Panc1 (cell line): ENCODE measurements at regions of chr9 and their contacts with region 1.

Region 1: DNA sequence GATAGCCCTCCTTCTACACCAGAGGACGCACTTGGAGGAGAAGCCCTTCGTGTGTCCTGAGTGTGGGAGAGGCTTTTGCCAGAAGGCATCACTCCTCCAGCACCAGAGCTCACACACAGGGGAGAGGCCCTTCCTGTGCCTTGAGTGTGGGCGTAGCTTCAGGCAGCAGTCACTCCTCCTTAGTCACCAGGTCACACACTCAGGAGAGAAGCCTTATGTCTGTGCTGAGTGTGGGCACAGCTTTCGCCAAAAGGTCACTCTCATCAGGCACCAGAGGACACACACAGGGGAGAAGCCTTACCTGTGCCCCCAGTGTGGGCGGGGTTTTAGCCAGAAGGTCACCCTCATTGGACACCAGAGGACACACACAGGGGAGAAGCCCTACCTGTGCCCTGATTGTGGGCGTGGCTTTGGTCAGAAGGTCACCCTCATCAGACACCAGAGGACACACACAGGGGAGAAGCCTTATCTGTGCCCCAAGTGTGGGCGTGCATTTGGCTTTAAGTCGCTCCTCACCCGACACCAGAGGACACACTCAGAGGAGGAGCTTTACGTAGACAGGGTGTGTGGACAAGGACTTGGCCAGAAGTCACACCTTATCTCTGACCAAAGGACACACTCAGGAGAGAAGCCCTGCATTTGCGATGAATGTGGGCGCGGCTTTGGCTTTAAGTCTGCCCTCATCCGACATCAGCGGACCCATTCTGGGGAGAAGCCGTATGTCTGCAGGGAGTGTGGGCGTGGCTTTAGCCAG is 27.7 kb downstream of the NUTM2F start:
- DNase-seq: no peak
- ATAC-seq: no peak
- H3K4me3 ChIP-seq: no peak overlapping the region
- H3K27ac ChIP-seq: no peak overlapping the region
- H3K4me1 ChIP-seq: no peaks in the 10 kb centered on the region
- H3K27me3 ChIP-seq: no peaks in the 10 kb centered on the region
- CTCF ChIP-seq: no peak

Region 2: DNA sequence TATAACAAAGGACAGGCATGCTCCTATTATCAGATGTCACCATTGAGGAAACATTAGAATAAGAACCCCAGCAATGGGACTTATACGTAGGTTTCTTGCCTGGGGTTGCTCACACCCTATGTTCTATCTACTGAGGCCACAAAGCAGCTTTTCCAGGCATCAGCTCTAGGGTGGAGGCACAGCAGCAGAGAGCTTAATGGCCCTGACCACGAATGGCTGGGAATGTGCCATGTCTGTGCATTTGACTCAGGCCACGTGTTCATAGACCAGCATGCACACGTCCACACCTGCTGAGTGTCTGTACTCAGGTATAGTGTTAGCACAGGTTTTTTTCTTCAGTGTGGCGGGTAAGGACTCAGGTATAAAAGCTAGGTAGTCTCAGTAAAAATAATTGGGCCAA is 555.2 kb after region 1 on chr9:
- CTCF ChIA-PET with region 1: no interaction called
- POLR2A ChIA-PET with region 1: interaction called, 15 read pairs
- in situ Hi-C with region 1: no loop called
- intact Hi-C with region 1: no loop called
- DNase-seq: no peak
- ATAC-seq: no peak
- H3K4me3 ChIP-seq: no peak overlapping the region
- H3K27ac ChIP-seq: no peak overlapping the region
- H3K4me1 ChIP-seq: peaks cover 3% of the 10 kb centered on the region; the same call in 1 of the 2 replicates
- H3K27me3 ChIP-seq: no peaks in the 10 kb centered on the region
- CTCF ChIP-seq: no peak